Transverse colon (tissue), 4 donors: ENCODE measurements at regions of chr9 and their contacts with region 1.

Region 1: GRCh38 chr9:21802195-21803000 is at the start of gene MTAP:
- DNase-seq: peak; percentile 90
- H3K4me3 ChIP-seq: peak within 1 kb of the TSS; percentile 76 to 90 (median 78)
- H3K27ac ChIP-seq: peak within 1 kb of the TSS; percentile 82 to 96 (median 92)
- H3K4me1 ChIP-seq: peaks cover 3 to 20% (median 11%) of the 10 kb centered on the region in 4 donors
- H3K27me3 ChIP-seq: peaks cover 5% of the 10 kb centered on the region
- CTCF ChIP-seq: no peak
- EP300 ChIP-seq: no peak
- POLR2A ChIP-seq: peak; percentile 80
- total RNA-seq, gene MTAP: 4.5 to 15.1 (median 13.6) TPM

Region 2: GRCh38 chr9:22008736-22009562 is 206.6 kb after region 1 on chr9 and contains the start of gene CDKN2B:
- in situ Hi-C with region 1: loop called in 2 of 4 experiments (anchors 25 kb)
- intact Hi-C with region 1: no loop called
- DNase-seq: peak; percentile 97
- H3K4me3 ChIP-seq: peak within 1 kb of the TSS; percentile 55 to 76 (median 66)
- H3K27ac ChIP-seq: peak within 1 kb of the TSS; percentile 90 to 95 (median 93)
- H3K4me1 ChIP-seq: peaks cover 0 to 34% (median 8%) of the 10 kb centered on the region in 4 donors
- H3K27me3 ChIP-seq: peaks cover 53% of the 10 kb centered on the region
- CTCF ChIP-seq: peak; percentile 88 to 98 (median 97)
- EP300 ChIP-seq: no peak
- POLR2A ChIP-seq: peak; percentile 95
- total RNA-seq, gene CDKN2B: 36.8 to 430 (median 265) TPM

Region 3: GRCh38 chr9:22147813-22148524 is 345.6 kb after region 1 on chr9:
- in situ Hi-C with region 1: loop called in 1 of 4 experiments (anchors 25 kb)
- intact Hi-C with region 1: no loop called
- DNase-seq: no peak
- H3K4me3 ChIP-seq: no peak overlapping the region
- H3K27ac ChIP-seq: no peak overlapping the region
- H3K4me1 ChIP-seq: no peaks in the 10 kb centered on the region
- H3K27me3 ChIP-seq: peaks cover 9% of the 10 kb centered on the region
- CTCF ChIP-seq: no peak
- EP300 ChIP-seq: no peak
- POLR2A ChIP-seq: no peak

Region 4: GRCh38 chr9:22469928-22470544 is 667.6 kb after region 1 on chr9:
- in situ Hi-C with region 1: loop called in 1 of 4 experiments (anchors 25 kb)
- intact Hi-C with region 1: no loop called
- DNase-seq: peak; percentile 8
- H3K4me3 ChIP-seq: no peak overlapping the region
- H3K27ac ChIP-seq: no peak overlapping the region
- H3K4me1 ChIP-seq: no peaks in the 10 kb centered on the region
- H3K27me3 ChIP-seq: no peaks in the 10 kb centered on the region
- CTCF ChIP-seq: peak; percentile 47 to 55 (median 48)
- EP300 ChIP-seq: no peak
- POLR2A ChIP-seq: no peak